ENCODE measurements at regions of chr10 and their contacts with region 1.

Region 1: DNA sequence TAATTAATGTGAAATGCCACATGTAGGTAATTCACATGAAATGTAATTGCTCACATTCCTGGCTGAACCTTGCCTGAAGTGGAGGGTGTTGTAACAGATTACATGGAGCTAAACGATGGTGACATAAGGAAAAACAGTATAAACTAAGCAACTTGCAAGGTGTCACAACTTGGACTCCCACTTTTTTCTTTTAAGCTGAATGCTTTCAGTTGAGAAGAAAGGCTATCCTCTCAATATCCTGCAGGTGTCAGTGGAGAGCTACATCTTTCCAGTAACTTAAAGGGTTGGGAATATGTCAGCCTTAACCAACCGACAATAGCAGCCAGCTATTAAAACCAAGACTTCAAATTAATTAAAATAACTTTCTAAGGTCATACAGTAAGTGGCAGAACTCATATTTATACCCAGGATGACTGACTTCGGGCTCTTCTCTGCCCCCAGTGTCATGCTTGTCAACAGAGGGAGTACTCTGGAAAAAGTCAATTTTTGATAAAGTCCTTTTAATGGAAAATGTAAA is 33.7 kb downstream of the NRBF2 start:
- DNase-seq: no peak
- H3K4me3 Mint-ChIP-seq: no peak overlapping the region
- H3K27ac Mint-ChIP-seq: no peak overlapping the region
- H3K4me1 Mint-ChIP-seq: peaks cover 23% of the 10 kb centered on the region
- H3K27me3 Mint-ChIP-seq: no peaks in the 10 kb centered on the region

Region 2: GRCh38 chr10:63123727-63124325 is 43.0 kb before region 1 on chr10:
- CTCF ChIA-PET with region 1: no interaction called
- POLR2A ChIA-PET with region 1: no interaction called
- intact Hi-C with region 1: no loop called
- DNase-seq: no peak
- H3K4me3 Mint-ChIP-seq: no peak overlapping the region
- H3K27ac Mint-ChIP-seq: no peak overlapping the region
- H3K4me1 Mint-ChIP-seq: no peaks in the 10 kb centered on the region
- H3K27me3 Mint-ChIP-seq: peaks cover 4% of the 10 kb centered on the region

Region 3: DNA sequence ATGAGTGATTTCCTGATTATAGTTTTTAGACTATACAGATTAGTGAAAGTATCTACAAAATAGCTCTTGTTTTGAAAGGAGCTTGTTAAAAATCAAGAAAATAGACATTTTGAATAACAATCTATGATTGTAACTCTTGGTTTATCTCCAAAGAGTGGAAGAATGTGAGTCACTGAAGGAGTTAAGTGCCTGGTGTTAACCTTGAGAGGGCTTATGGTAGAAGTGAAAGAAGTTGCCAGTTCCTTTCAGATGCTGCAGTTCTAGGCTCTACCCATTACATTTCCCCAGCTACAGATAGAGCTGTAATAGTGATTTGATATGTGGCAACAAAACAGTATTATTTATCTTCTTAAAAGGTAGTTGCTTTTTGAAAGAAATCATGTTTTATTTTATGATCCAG is 21.0 kb before region 1 on chr10:
- CTCF ChIA-PET with region 1: interaction called, 20 read pairs
- POLR2A ChIA-PET with region 1: no interaction called
- intact Hi-C with region 1: no loop called
- DNase-seq: no peak
- H3K4me3 Mint-ChIP-seq: no peak overlapping the region
- H3K27ac Mint-ChIP-seq: peak overlapping the region; percentile 38
- H3K4me1 Mint-ChIP-seq: peaks cover 44% of the 10 kb centered on the region
- H3K27me3 Mint-ChIP-seq: no peaks in the 10 kb centered on the region

Region 4: GRCh38 chr10:63767138-63767801 is 600.5 kb after region 1 on chr10:
- CTCF ChIA-PET with region 1: interaction called, 9 read pairs
- POLR2A ChIA-PET with region 1: no interaction called
- intact Hi-C with region 1: loop called (anchors 2 kb)
- DNase-seq: no peak
- H3K4me3 Mint-ChIP-seq: no peak overlapping the region
- H3K27ac Mint-ChIP-seq: no peak overlapping the region
- H3K4me1 Mint-ChIP-seq: no peaks in the 10 kb centered on the region
- H3K27me3 Mint-ChIP-seq: peaks cover 1% of the 10 kb centered on the region

Measured in activated CD4-positive, alpha-beta memory T cell treated with anti-CD3 and anti-CD28 coated beads for 36 hours (primary cell).